IMR-90 (cell line): ENCODE measurements at regions of chr13 and their contacts with region 1.

Region 1: GRCh38 chr13:42102961-42103865 is 54.8 kb downstream of the DGKH start:
- DNase-seq: peak; percentile 57
- ATAC-seq: no peak
- H3K4me3 ChIP-seq: no peak overlapping the region
- H3K27ac ChIP-seq: no peak overlapping the region
- H3K4me1 ChIP-seq: no peaks in the 10 kb centered on the region
- H3K27me3 ChIP-seq: no peaks in the 10 kb centered on the region
- CTCF ChIP-seq: no peak
- POLR2A ChIP-seq: no peak
- RAD21 ChIP-seq: no peak

Region 2: DNA sequence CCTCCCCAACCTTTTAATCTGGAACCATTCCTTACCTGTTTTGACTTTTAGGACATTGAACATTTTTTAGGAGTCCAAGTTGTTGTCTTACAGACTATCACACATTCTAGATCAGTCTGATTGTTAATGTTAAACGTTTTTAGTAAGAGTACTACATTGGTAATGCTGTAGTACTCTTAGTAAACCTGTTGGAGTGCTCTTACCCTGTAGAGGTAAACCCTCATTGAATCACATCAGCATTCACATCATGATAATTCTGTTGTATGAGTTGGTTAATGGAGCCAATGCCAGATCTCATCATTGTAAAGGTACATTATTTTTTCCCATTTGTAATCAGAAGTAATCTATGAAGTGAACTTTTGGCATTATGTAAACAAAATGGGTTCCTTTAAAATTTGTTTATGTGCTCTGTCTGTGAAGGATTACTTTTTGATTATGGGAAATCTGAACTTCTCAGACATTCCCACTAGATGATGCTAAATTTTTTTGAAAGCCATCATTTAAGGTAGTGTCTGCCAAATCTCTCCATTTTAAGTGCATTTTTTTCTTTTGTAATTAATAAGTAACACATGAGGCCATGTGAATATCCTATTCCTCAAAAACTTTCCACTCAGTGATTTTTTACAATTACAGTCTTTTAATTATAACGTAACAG is 197.5 kb before region 1 on chr13:
- CTCF ChIA-PET with region 1: no interaction called
- POLR2A ChIA-PET with region 1: no interaction called
- dilution Hi-C with region 1: no loop called
- in situ Hi-C with region 1: loop called (anchors 10 kb)
- intact Hi-C with region 1: loop called (anchors 5 kb)
- DNase-seq: peak; percentile 48
- ATAC-seq: peak; percentile 67
- H3K4me3 ChIP-seq: no peak overlapping the region
- H3K27ac ChIP-seq: no peak overlapping the region
- H3K4me1 ChIP-seq: no peaks in the 10 kb centered on the region
- H3K27me3 ChIP-seq: no peaks in the 10 kb centered on the region
- CTCF ChIP-seq: peak; percentile 51
- POLR2A ChIP-seq: no peak
- RAD21 ChIP-seq: peak; percentile 77